ENCODE measurements at regions of chr2 and their contacts with region 1.

Region 1: DNA sequence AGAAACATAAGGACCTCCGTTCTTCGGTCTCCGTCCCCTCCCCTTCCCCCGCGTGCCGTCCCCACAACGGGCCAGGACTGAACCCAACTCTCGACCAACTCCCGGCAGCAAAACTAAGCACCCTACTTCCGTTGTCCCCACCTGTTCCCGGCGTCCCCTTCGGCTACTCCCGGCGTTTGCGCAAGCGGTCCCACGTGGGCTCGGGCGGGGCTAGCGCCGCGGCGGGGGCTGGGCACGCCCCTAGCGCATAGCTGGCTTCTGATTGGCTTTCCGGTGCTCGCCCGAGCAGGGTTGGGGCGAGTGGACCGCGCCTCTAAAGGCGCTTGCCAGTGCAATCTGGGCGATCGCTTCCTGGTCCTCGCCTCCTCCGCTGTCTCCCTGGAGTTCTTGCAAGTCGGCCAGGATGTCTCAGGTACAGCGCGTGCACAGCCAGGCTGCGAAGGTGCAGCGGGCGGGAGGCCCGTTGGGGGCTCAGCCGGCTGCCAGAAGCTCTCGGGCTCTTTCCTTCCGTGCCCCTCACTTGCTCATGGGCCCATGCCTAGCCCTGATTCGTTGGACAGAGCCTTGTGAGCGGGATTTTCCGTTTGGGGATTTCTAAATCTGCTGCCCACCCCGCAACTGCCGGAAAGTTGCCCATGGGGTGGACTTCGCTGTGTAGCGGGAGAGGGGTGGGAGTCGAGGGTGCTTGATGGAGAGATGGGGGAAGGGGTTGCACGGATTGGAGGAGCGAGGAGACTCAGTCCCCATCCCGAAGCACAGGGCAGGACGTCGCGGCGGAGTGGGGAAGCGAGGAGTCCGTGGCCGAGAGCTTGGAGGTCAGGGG is at the starts of genes C2orf76 and DBI:
- DNase-seq: peak; percentile 93
- ATAC-seq: peak; percentile 92
- H3K4me3 Mint-ChIP-seq: peak within 1 kb of the TSS; percentile 100
- H3K27ac Mint-ChIP-seq: peak within 1 kb of the TSS; percentile 95
- H3K4me1 Mint-ChIP-seq: peaks cover 56% of the 10 kb centered on the region
- H3K27me3 Mint-ChIP-seq: no peaks in the 10 kb centered on the region
- CTCF ChIP-seq: no peak
- total RNA-seq, gene C2orf76: 10.0 and 11.0 TPM in 2 replicates
- total RNA-seq, gene DBI: 112 TPM in 2 replicates

Region 2: DNA sequence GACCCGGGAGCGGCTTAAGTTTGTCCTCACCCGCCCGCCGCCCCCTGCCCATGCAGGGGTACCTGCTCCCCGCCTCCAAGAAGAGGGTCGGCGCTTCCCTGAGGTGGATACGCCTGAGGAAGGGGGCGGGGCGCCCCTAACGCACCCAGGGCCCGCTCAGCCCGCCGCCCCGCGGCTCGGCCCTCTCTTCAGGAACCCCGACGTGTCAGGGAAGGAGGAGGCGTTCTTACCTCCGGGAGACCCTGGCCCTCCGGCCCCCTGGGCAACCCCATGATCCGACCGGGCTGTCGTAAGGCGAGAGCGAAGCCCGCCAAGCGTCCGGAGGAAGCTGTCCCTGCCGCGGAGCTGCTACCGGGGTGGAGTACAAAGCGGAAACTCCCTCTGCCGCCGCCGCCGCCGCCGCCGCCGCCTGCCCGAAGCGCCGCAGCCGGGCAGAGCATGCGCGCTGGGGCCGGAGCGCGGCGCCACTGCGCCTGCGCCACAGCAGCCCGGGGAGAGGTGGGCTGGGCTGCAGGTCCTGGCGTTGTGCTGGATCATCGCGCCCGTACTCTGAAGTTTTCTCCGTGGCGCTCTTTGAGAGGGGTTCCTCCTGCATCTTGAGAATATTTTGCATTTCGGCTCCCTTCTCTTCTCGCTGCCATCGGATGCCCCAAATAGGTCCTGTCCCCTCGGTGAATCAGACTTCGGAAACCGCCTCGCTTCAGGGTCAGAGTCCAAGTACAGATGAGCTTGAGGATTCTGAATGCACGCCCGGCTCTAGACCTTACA is 1353.0 kb before region 1 on chr2 and contains the start of gene CCDC93:
- CTCF ChIA-PET with region 1: no interaction called
- POLR2A ChIA-PET with region 1: no interaction called
- intact Hi-C with region 1: loop called (anchors 1 kb)
- DNase-seq: peak; percentile 94
- ATAC-seq: peak; percentile 82
- H3K4me3 Mint-ChIP-seq: peak within 1 kb of the TSS; percentile 95
- H3K27ac Mint-ChIP-seq: peak within 1 kb of the TSS; percentile 91
- H3K4me1 Mint-ChIP-seq: peaks cover 33% of the 10 kb centered on the region
- H3K27me3 Mint-ChIP-seq: peaks cover 9% of the 10 kb centered on the region
- CTCF ChIP-seq: no peak
- total RNA-seq, gene CCDC93: 35.5 and 38.8 TPM in 2 replicates

Region 3: GRCh38 chr2:118221666-118222594 is 1144.9 kb before region 1 on chr2:
- CTCF ChIA-PET with region 1: no interaction called
- POLR2A ChIA-PET with region 1: interaction called, 3 read pairs
- intact Hi-C with region 1: loop called (anchors 5 kb)
- DNase-seq: no peak
- ATAC-seq: peak; percentile 61
- H3K4me3 Mint-ChIP-seq: no peak overlapping the region
- H3K27ac Mint-ChIP-seq: no peak overlapping the region
- H3K4me1 Mint-ChIP-seq: peaks cover 30% of the 10 kb centered on the region
- H3K27me3 Mint-ChIP-seq: peaks cover 42% of the 10 kb centered on the region
- CTCF ChIP-seq: peak; percentile 74

Region 4: DNA sequence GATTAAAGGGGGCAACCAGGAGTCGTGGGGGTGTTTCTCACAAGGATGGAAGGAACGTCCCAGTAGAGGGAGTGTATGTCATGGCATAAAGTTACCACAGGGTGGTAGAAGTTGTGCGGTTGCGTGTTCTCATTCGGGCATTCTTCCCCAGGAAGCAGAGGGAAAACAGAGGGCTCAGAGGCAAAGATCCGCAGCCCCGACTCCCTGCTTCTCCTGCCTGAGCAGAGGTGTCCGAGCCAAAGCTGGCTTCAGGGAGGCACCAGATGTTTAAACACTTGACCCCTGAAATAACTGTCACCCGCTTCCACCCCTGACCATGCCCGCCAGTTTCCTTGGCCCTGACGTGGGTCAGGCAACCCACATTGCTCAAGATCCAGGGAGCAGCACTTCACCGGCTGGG is 603.1 kb before region 1 on chr2:
- CTCF ChIA-PET with region 1: no interaction called
- POLR2A ChIA-PET with region 1: no interaction called
- intact Hi-C with region 1: no loop called
- DNase-seq: no peak
- ATAC-seq: no peak
- H3K4me3 Mint-ChIP-seq: no peak overlapping the region
- H3K27ac Mint-ChIP-seq: no peak overlapping the region
- H3K4me1 Mint-ChIP-seq: no peaks in the 10 kb centered on the region
- H3K27me3 Mint-ChIP-seq: peaks cover 18% of the 10 kb centered on the region
- CTCF ChIP-seq: no peak

Region 5: GRCh38 chr2:119338826-119339561 is 27.9 kb before region 1 on chr2:
- CTCF ChIA-PET with region 1: no interaction called
- POLR2A ChIA-PET with region 1: interaction called, 10 read pairs
- intact Hi-C with region 1: loop called (anchors 2 kb)
- DNase-seq: no peak
- ATAC-seq: peak; percentile 97
- H3K4me3 Mint-ChIP-seq: peak overlapping the region; percentile 29
- H3K27ac Mint-ChIP-seq: peak overlapping the region; percentile 85
- H3K4me1 Mint-ChIP-seq: peaks cover 31% of the 10 kb centered on the region
- H3K27me3 Mint-ChIP-seq: no peaks in the 10 kb centered on the region
- CTCF ChIP-seq: no peak

Region 6: GRCh38 chr2:119678998-119679710 is 312.3 kb after region 1 on chr2 and contains the start of gene TMEM177:
- CTCF ChIA-PET with region 1: no interaction called
- POLR2A ChIA-PET with region 1: no interaction called
- intact Hi-C with region 1: loop called (anchors 1 kb)
- DNase-seq: peak; percentile 90
- ATAC-seq: peak; percentile 96
- H3K4me3 Mint-ChIP-seq: peak within 1 kb of the TSS; percentile 90
- H3K27ac Mint-ChIP-seq: peak within 1 kb of the TSS; percentile 68
- H3K4me1 Mint-ChIP-seq: peaks cover 23% of the 10 kb centered on the region
- H3K27me3 Mint-ChIP-seq: no peaks in the 10 kb centered on the region
- CTCF ChIP-seq: no peak
- total RNA-seq, gene TMEM177: 9.0 and 10.3 TPM in 2 replicates

Region 7: GRCh38 chr2:119910566-119910965 is 543.7 kb after region 1 on chr2:
- CTCF ChIA-PET with region 1: no interaction called
- POLR2A ChIA-PET with region 1: no interaction called
- intact Hi-C with region 1: no loop called
- DNase-seq: no peak
- ATAC-seq: no peak
- H3K4me3 Mint-ChIP-seq: no peak overlapping the region
- H3K27ac Mint-ChIP-seq: no peak overlapping the region
- H3K4me1 Mint-ChIP-seq: no peaks in the 10 kb centered on the region
- H3K27me3 Mint-ChIP-seq: no peaks in the 10 kb centered on the region
- CTCF ChIP-seq: no peak

Region 8: GRCh38 chr2:120174963-120175581 is 808.2 kb after region 1 on chr2:
- CTCF ChIA-PET with region 1: no interaction called
- POLR2A ChIA-PET with region 1: interaction called, 4 read pairs
- intact Hi-C with region 1: loop called (anchors 5 kb)
- DNase-seq: no peak
- ATAC-seq: no peak
- H3K4me3 Mint-ChIP-seq: no peak overlapping the region
- H3K27ac Mint-ChIP-seq: peak overlapping the region; percentile 47
- H3K4me1 Mint-ChIP-seq: peaks cover 50% of the 10 kb centered on the region
- H3K27me3 Mint-ChIP-seq: no peaks in the 10 kb centered on the region
- CTCF ChIP-seq: peak; percentile 98